ENCODE measurements at regions of chr4 and their contacts with region 1.

Region 1: DNA sequence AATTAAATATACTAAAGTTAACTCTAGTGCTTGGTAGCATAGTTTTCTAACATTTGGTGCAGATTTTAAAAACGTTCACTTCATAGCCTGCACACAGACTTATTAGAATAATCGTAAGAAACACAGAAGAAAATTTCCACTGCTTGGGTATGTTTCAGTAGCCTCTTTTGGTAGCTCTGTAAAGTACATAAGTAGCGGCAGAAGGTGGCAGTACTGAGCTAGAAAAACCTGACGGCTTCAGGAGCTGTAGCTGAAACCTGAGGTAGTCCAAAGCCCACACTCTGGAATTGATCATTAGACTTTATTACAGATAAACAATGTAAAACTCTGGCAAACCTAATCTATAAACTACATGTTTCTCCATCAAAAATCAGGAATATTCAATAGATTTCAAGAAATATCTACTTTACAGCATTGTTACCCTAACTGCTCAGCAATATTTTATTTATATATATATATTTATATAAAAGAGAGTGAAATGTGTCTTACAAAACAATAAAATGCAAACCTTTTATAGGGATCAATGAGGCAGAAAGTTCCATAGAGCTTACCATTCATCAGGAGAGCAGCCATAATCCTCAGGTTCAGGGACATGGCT is 88.2 kb downstream of the ATP8A1 start:
- DNase-seq: peak; percentile 72
- H3K4me3 ChIP-seq: no peak overlapping the region
- H3K27ac ChIP-seq: no peak overlapping the region
- H3K4me1 ChIP-seq: peaks cover 0 to 15% (median 6%) of the 10 kb centered on the region in 4 donors
- H3K27me3 ChIP-seq: no peaks in the 10 kb centered on the region
- CTCF ChIP-seq: peak; percentile 12 to 70 (median 54)
- EP300 ChIP-seq: no peak
- POLR2A ChIP-seq: no peak

Region 2: DNA sequence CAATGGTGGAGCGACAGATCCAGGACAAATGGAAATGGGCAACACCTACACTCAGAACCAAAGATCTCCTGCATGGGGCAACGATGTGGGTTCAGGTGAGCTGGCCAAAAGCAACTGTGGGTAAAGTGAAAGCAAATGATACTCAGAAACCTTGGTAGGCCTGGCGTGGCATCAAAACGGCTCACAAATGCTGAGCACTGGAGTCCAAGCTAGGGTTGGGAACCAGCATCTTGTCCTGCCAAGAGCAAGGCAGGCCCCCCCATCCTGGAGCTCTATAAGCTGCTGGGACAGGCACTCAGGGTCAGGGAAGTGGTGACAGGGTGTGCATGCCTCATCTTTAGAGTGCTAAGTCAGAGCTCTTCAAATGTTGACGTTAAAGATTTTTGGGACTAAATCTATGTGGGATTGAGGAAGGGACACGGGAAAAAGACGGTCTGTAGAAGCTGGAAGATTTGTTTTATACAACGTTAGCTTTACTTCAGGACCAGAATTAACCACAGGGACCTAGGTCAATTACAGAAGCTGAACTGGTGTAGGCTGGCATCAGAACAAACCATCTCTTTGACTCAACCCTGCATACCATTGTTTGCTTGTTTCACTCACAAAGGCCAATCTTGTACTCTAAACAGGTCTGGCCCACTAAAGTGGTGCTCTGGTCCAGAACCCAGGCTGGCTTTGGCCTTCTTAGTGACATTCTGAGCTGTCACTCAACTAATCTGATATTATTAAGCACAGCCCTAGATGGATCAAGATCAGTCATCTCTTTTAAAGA is 77.5 kb after region 1 on chr4:
- intact Hi-C with region 1: no loop called
- DNase-seq: no peak
- H3K4me3 ChIP-seq: no peak overlapping the region
- H3K27ac ChIP-seq: no peak overlapping the region
- H3K4me1 ChIP-seq: no peaks in the 10 kb centered on the region
- H3K27me3 ChIP-seq: no peaks in the 10 kb centered on the region
- CTCF ChIP-seq: no peak
- EP300 ChIP-seq: no peak
- POLR2A ChIP-seq: no peak

Region 3: DNA sequence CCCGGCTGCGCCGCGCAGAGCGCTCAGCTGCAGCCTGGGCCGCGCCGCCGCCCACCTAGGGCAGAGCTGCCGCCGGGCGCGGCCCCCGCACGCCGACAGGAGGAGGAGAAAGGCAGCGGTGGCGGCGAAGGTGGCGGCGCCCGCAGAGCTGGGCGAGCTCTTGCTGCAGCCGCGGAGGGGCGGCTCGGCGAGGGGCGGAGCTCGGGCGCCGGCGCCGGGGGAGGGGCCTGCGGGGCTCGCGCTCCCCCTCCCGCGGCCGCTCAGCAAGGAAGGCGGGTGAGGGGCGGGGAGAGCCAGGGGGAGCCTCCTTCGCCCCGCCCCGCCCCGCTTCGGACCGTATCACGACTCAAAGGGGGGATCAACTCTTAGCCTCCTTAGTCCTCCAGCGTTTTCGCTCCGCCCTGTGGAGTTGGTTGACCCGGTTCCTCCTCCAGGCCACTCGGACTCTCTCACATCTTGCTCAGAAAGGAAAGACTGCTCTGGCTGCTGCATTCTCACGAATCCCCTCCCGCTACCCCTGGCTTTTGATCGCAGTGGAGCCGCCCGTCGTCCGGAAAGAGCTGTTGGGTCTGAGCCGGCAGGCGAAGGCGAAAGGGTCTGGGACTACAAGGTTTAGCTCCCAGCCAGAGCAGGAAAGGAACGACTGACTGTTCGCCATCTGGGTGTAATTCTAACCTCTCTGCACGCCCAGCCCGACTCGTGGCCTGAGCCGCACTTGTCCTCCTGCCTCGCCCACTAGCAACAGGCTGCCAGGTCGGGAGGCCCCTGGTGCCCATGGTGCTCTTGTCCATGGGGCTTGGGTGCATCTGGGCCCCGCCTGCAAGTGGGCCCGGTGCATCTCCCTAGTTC is 88.5 kb after region 1 on chr4 and contains the start of gene ATP8A1:
- intact Hi-C with region 1: loop called (anchors 2 kb)
- DNase-seq: peak; percentile 94
- H3K4me3 ChIP-seq: peak within 1 kb of the TSS; percentile 62 to 91 (median 88)
- H3K27ac ChIP-seq: peak within 1 kb of the TSS; percentile 83 to 87 (median 86)
- H3K4me1 ChIP-seq: peaks cover 0 to 35% (median 25%) of the 10 kb centered on the region in 4 donors
- H3K27me3 ChIP-seq: no peaks in the 10 kb centered on the region
- CTCF ChIP-seq: no peak
- EP300 ChIP-seq: no peak
- POLR2A ChIP-seq: peak; percentile 21 to 48
- total RNA-seq, gene ATP8A1: 10.5 to 19.3 (median 15.5) TPM

Region 4: GRCh38 chr4:42747971-42748370 is 179.3 kb after region 1 on chr4:
- intact Hi-C with region 1: loop called (anchors 10 kb)
- DNase-seq: no peak
- H3K4me3 ChIP-seq: no peak overlapping the region
- H3K27ac ChIP-seq: no peak overlapping the region
- H3K4me1 ChIP-seq: no peaks in the 10 kb centered on the region
- H3K27me3 ChIP-seq: no peaks in the 10 kb centered on the region
- CTCF ChIP-seq: no peak
- EP300 ChIP-seq: no peak
- POLR2A ChIP-seq: no peak

Region 5: DNA sequence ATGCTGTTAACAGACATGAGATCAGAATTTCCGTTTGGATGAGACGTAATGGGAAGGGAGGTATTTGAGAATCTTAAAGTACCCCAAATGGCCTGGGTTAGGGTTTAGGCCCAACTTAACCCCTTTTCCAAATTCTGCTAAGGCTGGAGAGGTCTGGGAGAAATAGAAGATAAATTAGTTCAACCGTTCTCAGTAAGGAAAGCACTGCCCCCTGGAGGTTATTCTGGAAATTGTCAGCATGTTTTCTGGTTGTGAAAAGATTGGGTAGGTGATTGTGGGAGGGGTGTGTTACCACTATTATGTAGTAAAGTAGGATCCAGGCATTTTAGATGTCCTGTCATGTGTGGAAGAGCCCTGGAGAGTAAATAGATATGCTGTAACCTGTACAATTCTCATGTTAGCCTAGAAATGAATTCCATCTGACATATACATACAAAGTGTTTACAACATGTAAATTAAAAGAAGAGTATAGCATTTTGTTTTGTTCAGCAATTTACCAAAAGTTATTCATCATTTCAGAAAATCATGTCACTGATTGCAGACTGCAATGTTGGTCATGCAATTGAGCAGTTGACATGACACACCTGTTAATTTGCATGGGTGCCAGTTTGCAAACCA is 297.0 kb after region 1 on chr4:
- intact Hi-C with region 1: loop called (anchors 1 kb)
- DNase-seq: no peak
- H3K4me3 ChIP-seq: no peak overlapping the region
- H3K27ac ChIP-seq: no peak overlapping the region
- H3K4me1 ChIP-seq: no peaks in the 10 kb centered on the region
- H3K27me3 ChIP-seq: no peaks in the 10 kb centered on the region
- CTCF ChIP-seq: peak; percentile 25 to 77 (median 58)
- EP300 ChIP-seq: no peak
- POLR2A ChIP-seq: no peak

Measured in sigmoid colon (tissue), 7 donors.